Gastrocnemius medialis (tissue), 4 donors: ENCODE measurements at regions of chr17 and their contacts with region 1.

Region 1: DNA sequence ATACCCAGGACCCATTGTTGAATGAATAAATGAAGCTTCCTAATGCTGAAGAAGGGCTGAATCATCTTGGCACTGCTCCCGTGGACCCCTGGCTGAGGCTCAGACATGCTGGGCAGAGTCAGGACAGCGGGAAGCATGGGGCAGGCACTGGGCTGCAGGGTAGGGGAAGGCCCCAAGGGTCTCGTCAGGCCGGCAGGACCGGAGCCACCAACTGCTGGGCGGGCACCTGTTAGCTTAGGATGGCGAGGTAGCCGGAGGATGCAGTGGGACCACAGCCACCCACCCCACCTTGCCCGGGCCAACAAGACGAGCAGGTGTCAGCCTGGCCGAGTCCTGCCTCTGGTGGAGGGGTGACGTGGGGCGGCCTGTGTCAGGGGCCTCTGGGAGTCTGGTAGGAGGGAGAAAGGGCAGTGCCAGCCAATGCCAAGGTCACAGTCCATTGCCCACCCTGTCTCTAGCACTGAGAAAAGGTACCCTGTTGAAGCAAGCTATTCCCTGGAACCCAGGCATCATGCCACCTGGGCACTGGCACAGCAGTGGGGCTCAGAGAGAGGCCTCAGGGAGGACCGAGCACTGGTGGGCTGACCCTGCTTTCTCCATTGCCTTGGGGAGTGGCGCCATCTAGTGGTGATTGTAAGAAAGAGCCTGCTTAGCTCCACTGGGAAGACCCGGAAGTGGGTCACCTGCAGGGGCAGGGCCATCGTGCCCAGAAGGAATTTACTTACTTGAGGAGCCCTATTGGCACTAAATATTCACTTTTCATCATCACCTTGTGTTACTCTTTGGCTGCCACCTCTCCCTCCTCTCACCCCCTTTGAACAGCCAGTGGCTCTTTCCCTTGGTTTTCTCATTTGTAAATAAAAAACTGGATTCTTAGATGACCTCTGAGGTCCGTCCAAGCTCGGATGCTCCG is 3.0 kb upstream of the DLX3 start:
- DNase-seq: peak; percentile 44 to 63
- ATAC-seq: peak; percentile 70 to 87
- H3K4me3 ChIP-seq: no peak overlapping the region
- H3K27ac ChIP-seq: no peak overlapping the region
- H3K4me1 ChIP-seq: peaks cover 5 to 19% of the 10 kb centered on the region in 2 donors
- H3K27me3 ChIP-seq: peaks cover 61 to 78% (median 64%) of the 10 kb centered on the region in 3 donors
- CTCF ChIP-seq: peak; percentile 85 to 96 (median 92)
- POLR2A ChIP-seq: no peak

Region 2: GRCh38 chr17:49523706-49524472 is 474.2 kb before region 1 on chr17:
- in situ Hi-C with region 1: no loop called
- intact Hi-C with region 1: no loop called
- DNase-seq: no peak
- ATAC-seq: no peak
- H3K4me3 ChIP-seq: no peak overlapping the region
- H3K27ac ChIP-seq: no peak overlapping the region
- H3K4me1 ChIP-seq: no peaks in the 10 kb centered on the region
- H3K27me3 ChIP-seq: no peaks in the 10 kb centered on the region
- CTCF ChIP-seq: no peak
- POLR2A ChIP-seq: no peak

Region 3: DNA sequence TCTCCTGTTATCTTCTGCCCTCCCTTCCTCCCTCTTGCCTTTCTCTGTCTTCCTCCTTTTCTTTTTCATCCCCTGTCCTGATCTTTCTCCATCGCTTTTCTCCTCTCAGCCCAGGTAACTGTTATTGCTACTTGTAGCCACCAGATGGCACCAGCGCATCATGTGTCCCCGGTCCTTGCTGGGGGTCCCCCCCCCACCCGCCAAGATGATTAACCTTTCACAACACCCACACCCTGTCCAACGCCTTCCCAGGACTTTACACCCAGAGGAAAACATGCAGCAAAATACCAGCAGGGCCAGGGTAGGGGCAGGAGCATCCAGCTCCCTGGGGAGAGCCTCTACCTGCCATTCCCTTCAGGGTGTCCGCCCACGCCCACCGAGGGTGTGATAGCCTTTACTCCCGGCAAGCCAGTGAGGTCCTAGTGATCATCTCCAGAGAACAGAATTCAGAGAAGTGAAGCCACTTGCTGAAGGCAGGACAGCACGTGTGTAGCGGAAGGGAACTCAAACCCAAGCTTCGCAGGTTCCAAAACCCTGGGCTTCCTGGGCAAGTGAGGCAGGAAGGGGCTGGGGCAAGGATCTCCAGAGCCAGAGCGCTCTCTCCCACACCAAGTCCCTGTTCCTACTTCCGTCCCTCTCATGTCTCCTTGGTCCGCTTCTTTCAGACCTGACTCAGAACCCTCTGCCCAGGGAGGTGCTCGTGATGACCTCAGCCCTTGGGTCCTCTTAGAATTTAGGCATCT is 136.7 kb before region 1 on chr17:
- in situ Hi-C with region 1: loop called in 3 of 4 experiments (anchors 5 to 10 kb)
- intact Hi-C with region 1: loop called (anchors 1 kb)
- DNase-seq: no peak
- ATAC-seq: peak; percentile 49
- H3K4me3 ChIP-seq: no peak overlapping the region
- H3K27ac ChIP-seq: no peak overlapping the region
- H3K4me1 ChIP-seq: peaks cover 0 to 5% of the 10 kb centered on the region in 2 donors
- H3K27me3 ChIP-seq: no peaks in the 10 kb centered on the region
- CTCF ChIP-seq: peak; percentile 67 to 83 (median 76)
- POLR2A ChIP-seq: no peak

Region 4: GRCh38 chr17:49873466-49873865 is 124.6 kb before region 1 on chr17:
- in situ Hi-C with region 1: loop called in 2 of 4 experiments (anchors 10 kb)
- intact Hi-C with region 1: no loop called
- DNase-seq: no peak
- ATAC-seq: no peak
- H3K4me3 ChIP-seq: no peak overlapping the region
- H3K27ac ChIP-seq: no peak overlapping the region
- H3K4me1 ChIP-seq: no peaks in the 10 kb centered on the region
- H3K27me3 ChIP-seq: no peaks in the 10 kb centered on the region
- CTCF ChIP-seq: no peak
- POLR2A ChIP-seq: no peak

Region 5: DNA sequence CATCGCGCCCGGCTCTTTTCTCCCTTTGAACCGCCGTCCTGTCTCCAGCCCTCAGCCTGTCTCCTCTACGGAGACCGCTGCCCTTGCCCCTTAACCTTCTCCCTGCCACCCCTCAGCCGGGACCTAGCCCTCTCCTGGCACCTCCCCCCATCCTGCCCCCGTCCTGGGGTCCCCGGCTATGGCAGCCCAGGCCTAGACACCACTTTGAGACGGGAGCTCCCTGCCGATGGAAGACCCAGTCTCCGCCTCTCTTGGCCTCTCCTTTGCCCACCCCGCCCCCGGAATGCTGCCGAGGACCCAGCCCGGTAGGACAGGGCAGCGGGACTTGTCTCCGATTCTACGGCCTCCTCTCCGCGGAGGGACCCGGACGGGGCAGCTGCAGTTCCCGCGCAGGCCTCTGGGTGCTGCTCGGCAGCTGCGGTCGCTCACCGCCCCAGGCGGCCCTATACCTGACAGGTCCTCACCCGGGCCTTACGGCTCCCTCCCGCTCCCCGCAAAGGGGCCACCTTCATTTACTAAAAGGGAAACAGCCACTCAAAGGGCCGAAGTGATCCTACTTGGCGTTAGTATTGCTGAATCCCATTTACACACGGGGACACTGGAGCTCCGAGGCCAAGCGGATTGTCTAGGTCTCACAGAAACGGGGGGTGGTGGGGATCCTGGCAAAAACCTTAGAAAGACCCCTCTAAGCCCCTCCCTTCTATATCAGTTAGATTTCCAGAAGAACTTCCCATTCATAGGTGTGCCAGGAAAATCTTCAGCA is 117.6 kb before region 1 on chr17:
- in situ Hi-C with region 1: loop called in 1 of 4 experiments (anchors 10 kb)
- intact Hi-C with region 1: loop called (anchors 1 kb)
- DNase-seq: peak; percentile 28 to 44
- ATAC-seq: peak; percentile 64 to 80
- H3K4me3 ChIP-seq: no peak overlapping the region
- H3K27ac ChIP-seq: no peak overlapping the region
- H3K4me1 ChIP-seq: no peaks in the 10 kb centered on the region
- H3K27me3 ChIP-seq: peaks cover 22 to 27% (median 24%) of the 10 kb centered on the region in 3 donors
- CTCF ChIP-seq: peak; percentile 80 to 97 (median 91)
- POLR2A ChIP-seq: no peak

Region 6: GRCh38 chr17:49952209-49952911 is 45.7 kb before region 1 on chr17:
- in situ Hi-C with region 1: no loop called
- intact Hi-C with region 1: loop called (anchors 1 kb)
- DNase-seq: peak in 1 of 2 donors; percentile 43
- ATAC-seq: peak in 1 of 2 donors; percentile 74
- H3K4me3 ChIP-seq: no peak overlapping the region
- H3K27ac ChIP-seq: no peak overlapping the region
- H3K4me1 ChIP-seq: no peaks in the 10 kb centered on the region
- H3K27me3 ChIP-seq: peaks cover 26 to 34% (median 27%) of the 10 kb centered on the region in 3 donors
- CTCF ChIP-seq: peak; percentile 36 to 71 (median 47)
- POLR2A ChIP-seq: no peak

Region 7: DNA sequence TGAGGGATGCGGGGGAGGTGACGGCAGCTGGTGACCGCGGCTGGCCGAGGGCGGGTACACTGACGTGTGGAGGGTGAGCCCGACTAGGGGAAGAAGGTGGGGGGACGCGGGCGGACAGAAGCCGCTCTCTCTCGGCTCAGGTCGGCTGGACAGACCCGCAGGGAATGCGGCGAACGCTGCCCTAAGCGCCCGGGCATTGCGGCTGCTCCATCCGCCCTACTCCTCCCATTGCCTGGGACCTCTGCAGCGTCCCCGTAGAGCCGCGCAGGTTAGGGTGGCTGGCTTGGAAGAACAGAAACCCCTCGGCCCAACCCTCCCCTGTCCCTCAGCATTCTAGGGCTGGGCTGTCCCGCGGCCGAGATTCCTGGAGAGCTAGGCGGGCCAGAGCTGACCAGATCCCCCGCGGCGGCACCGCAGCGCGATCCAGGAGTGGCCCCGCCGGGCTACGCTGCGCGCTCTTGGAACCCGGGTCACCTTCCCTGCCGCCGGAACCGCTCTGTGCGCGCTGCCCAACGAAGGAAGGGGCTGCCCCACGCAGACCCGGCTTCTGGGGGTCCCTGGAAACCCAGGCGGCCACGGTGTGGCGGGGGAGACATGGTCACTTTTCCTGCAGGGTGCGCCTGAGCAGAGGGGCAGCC is 26.1 kb before region 1 on chr17:
- in situ Hi-C with region 1: no loop called
- intact Hi-C with region 1: no loop called
- DNase-seq: no peak
- ATAC-seq: no peak
- H3K4me3 ChIP-seq: peak overlapping the region in 2 of 4 donors; percentile 11 to 13
- H3K27ac ChIP-seq: no peak overlapping the region
- H3K4me1 ChIP-seq: peaks cover 0 to 22% of the 10 kb centered on the region in 2 donors
- H3K27me3 ChIP-seq: peaks cover 72 to 82% (median 82%) of the 10 kb centered on the region in 3 donors
- CTCF ChIP-seq: no peak
- POLR2A ChIP-seq: no peak

Region 8: GRCh38 chr17:50055426-50056230 is 57.6 kb after region 1 on chr17 and contains the start of gene ITGA3:
- in situ Hi-C with region 1: no loop called
- intact Hi-C with region 1: no loop called
- DNase-seq: peak in 1 of 2 donors; percentile 55
- ATAC-seq: peak; percentile 20 to 25
- H3K4me3 ChIP-seq: peak within 1 kb of the TSS; percentile 71 to 96 (median 82)
- H3K27ac ChIP-seq: peak within 1 kb of the TSS; percentile 86 to 96 (median 92)
- H3K4me1 ChIP-seq: peaks cover 47 to 49% of the 10 kb centered on the region in 2 donors
- H3K27me3 ChIP-seq: no peaks in the 10 kb centered on the region
- CTCF ChIP-seq: no peak
- POLR2A ChIP-seq: peak; percentile 39 to 54
- total RNA-seq, gene ITGA3: 5.1 to 25.9 (median 18.4) TPM